Activated CD4-positive, alpha-beta T cell treated with anti-CD3 and anti-CD28 coated beads for 36 hours (primary cell): ENCODE measurements at regions of chr6 and their contacts with region 1.

Region 1: DNA sequence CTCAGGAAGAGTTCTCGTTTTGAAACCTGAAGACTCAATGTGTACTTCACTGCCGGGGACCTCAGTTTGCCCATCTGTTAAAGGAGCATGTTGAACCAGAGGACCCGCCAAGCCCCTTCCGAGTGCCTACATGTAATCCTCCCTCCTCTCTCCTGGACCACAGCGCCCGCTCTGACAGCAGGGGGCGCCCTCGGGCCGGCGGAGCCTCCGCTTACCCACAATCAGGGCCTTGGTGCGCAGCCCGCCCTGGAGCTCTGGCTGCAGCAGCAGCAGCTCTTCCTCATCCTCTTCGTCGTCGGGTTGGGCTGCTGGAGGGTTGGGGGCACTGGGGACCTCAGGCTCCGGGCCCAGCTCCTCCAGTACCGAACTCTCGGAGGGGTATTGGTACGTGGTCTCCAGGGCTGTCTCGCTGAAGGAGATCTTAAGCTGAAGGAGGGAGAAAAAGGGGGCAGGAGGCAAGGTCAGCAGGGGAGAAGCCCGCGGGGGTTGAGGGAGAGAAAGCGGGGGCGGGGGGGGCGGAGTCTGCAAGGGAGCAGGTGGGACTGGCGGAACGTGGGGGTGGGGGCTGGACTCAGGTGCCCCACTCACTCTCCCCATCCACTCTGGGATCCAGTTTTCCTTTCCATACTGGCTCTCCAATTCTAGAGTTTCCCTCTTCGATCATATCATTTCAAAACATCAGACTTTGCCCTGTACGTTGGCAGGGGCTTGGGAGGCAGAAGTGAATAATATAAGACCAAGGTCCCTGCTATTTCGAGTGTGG is 6.3 kb upstream of the DHX16 start:
- DNase-seq: peak; percentile 96
- ATAC-seq: peak; percentile 37
- H3K4me3 Mint-ChIP-seq: peak overlapping the region; percentile 100
- H3K27ac Mint-ChIP-seq: peak overlapping the region; percentile 97
- H3K4me1 Mint-ChIP-seq: peaks cover 23% of the 10 kb centered on the region
- H3K27me3 Mint-ChIP-seq: no peaks in the 10 kb centered on the region

Region 2: GRCh38 chr6:30311101-30311500 is 368.0 kb before region 1 on chr6:
- CTCF ChIA-PET with region 1: no interaction called
- POLR2A ChIA-PET with region 1: no interaction called
- intact Hi-C with region 1: no loop called
- DNase-seq: no peak
- ATAC-seq: no peak
- H3K4me3 Mint-ChIP-seq: no peak overlapping the region
- H3K27ac Mint-ChIP-seq: no peak overlapping the region
- H3K4me1 Mint-ChIP-seq: peaks cover 29% of the 10 kb centered on the region
- H3K27me3 Mint-ChIP-seq: no peaks in the 10 kb centered on the region

Region 3: GRCh38 chr6:30489081-30490025 is 189.8 kb before region 1 on chr6 and contains the start of gene HLA-E:
- CTCF ChIA-PET with region 1: no interaction called
- POLR2A ChIA-PET with region 1: no interaction called
- intact Hi-C with region 1: loop called (anchors 2 kb)
- DNase-seq: peak; percentile 92
- ATAC-seq: peak; percentile 78
- H3K4me3 Mint-ChIP-seq: peak within 1 kb of the TSS; percentile 95
- H3K27ac Mint-ChIP-seq: peak within 1 kb of the TSS; percentile 98
- H3K4me1 Mint-ChIP-seq: peaks cover 43% of the 10 kb centered on the region
- H3K27me3 Mint-ChIP-seq: no peaks in the 10 kb centered on the region
- total RNA-seq, gene HLA-E: 451 to 502 TPM

Region 4: GRCh38 chr6:30646458-30647241 is 32.5 kb before region 1 on chr6 and contains the start of gene C6orf136:
- CTCF ChIA-PET with region 1: no interaction called
- POLR2A ChIA-PET with region 1: interaction called, 3 read pairs
- intact Hi-C with region 1: loop called in 1 of 2 experiments (anchors 1 kb)
- DNase-seq: peak; percentile 97
- ATAC-seq: peak; percentile 86
- H3K4me3 Mint-ChIP-seq: peak within 1 kb of the TSS; percentile 78
- H3K27ac Mint-ChIP-seq: peak within 1 kb of the TSS; percentile 88
- H3K4me1 Mint-ChIP-seq: peaks cover 20% of the 10 kb centered on the region
- H3K27me3 Mint-ChIP-seq: no peaks in the 10 kb centered on the region
- total RNA-seq, gene C6orf136: 26.5 to 30.8 TPM

Region 5: GRCh38 chr6:30742316-30743098 is 63.4 kb after region 1 on chr6 and contains the start of gene FLOT1:
- CTCF ChIA-PET with region 1: interaction called, 5 read pairs
- POLR2A ChIA-PET with region 1: no interaction called
- intact Hi-C with region 1: loop called in 1 of 2 experiments (anchors 1 kb)
- DNase-seq: peak; percentile 98
- ATAC-seq: peak; percentile 74
- H3K4me3 Mint-ChIP-seq: peak within 1 kb of the TSS; percentile 96
- H3K27ac Mint-ChIP-seq: peak within 1 kb of the TSS; percentile 95
- H3K4me1 Mint-ChIP-seq: peaks cover 67% of the 10 kb centered on the region
- H3K27me3 Mint-ChIP-seq: no peaks in the 10 kb centered on the region
- total RNA-seq, gene FLOT1: 155 to 188 TPM

Region 6: DNA sequence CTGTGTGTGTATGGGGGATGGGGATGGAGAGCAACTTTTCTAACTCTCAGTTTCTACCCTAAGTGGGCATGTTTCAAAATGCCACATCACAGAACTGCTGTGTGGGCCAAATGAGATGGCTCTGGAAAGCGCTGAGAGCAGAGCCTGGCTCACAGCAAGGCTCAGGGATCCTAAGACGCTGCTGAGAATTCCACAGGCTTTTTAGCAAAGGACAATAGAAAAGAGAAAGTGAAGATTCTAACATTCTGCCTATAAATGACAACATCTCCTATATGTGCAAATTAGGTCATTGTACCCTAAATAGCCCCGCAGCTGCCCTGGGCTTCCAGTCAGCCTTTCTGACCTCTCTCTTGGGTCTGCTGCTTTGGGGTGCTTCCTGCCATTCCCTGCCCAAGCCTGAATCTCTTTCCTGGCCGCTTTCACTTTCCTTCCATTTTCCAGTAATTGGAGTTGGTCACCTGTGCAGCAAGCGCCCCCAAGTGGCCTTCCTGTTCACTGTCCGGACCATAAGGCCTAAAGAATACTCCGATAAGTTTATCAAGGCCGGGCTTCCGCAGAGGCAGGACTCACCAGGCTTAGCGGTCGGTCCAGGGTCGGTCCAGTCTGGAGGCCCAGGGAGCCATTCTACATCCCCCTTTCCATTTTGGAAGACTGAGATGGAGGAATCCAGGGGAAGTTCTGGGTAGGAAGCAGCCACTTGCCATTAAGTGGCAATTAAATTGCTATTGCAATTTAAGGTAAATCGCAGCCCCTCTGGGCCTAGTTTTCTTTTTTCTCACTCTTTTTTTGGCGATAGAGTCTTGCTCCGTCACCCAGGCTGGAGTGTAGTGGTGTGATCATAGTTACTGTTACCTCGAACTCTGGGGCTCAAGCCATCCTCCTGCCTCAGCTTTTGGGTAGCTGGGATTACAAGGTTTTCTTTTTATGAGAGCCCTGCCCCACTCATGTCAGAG is 198.6 kb after region 1 on chr6:
- CTCF ChIA-PET with region 1: interaction called, 5 read pairs
- POLR2A ChIA-PET with region 1: no interaction called
- intact Hi-C with region 1: loop called (anchors 2 to 5 kb)
- DNase-seq: peak; percentile 86
- ATAC-seq: peak; percentile 84
- H3K4me3 Mint-ChIP-seq: peak overlapping the region; percentile 64
- H3K27ac Mint-ChIP-seq: peak overlapping the region; percentile 85
- H3K4me1 Mint-ChIP-seq: peaks cover 24% of the 10 kb centered on the region
- H3K27me3 Mint-ChIP-seq: no peaks in the 10 kb centered on the region